Esophagus muscularis mucosa (tissue), 4 donors: ENCODE measurements at regions of chr7 and their contacts with region 1.

Region 1: GRCh38 chr7:23264916-23265458 is 18.4 kb downstream of the GPNMB start:
- DNase-seq: no peak
- H3K4me3 ChIP-seq: no peak overlapping the region
- H3K27ac ChIP-seq: no peak overlapping the region
- H3K4me1 ChIP-seq: no peaks in the 10 kb centered on the region
- H3K27me3 ChIP-seq: no peaks in the 10 kb centered on the region
- CTCF ChIP-seq: no peak
- EP300 ChIP-seq: no peak
- POLR2A ChIP-seq: no peak

Region 2: DNA sequence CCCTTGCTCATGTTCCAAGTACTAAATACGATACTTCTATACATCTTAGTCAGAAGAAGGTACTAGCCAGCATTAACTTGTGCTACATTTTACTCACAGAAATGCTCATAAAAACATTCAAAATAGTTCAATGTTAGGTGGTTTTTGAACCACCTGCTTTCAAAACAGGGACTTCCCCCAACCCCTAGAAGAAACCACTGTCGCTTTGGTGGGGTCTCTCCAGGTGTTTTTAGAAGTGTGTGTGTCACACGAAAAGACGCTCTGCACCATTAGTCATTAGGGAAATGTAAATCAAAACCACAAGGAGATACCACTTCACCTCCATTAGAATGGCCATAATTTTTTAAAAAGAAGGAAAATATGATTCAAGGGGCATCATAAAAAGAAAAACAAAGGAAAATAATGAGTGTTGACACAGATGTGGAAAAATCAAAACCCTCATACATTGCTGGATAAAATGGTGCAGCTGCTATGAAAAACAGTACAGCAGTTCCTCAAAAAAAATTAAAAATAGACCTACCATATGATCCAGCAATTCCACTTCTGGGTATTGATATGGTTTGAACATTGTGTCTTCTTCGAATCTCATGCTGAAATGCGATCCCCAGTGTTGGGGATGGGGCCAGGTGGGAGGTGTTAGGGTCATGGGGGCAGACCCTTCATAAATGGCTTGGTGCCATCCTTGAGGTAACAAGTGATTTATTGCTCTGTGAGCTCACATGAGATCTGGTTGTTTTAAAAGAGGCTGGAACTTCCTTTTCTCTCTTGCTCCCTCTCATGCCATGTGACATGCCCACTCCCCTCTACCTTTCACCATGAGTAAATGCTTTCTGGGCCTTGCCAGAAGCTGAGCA is 108.4 kb after region 1 on chr7:
- intact Hi-C with region 1: no loop called
- DNase-seq: no peak
- H3K4me3 ChIP-seq: no peak overlapping the region
- H3K27ac ChIP-seq: no peak overlapping the region
- H3K4me1 ChIP-seq: no peaks in the 10 kb centered on the region
- H3K27me3 ChIP-seq: peaks cover 0 to 7% (median 0%) of the 10 kb centered on the region in 4 donors
- CTCF ChIP-seq: no peak
- EP300 ChIP-seq: no peak
- POLR2A ChIP-seq: no peak

Region 3: DNA sequence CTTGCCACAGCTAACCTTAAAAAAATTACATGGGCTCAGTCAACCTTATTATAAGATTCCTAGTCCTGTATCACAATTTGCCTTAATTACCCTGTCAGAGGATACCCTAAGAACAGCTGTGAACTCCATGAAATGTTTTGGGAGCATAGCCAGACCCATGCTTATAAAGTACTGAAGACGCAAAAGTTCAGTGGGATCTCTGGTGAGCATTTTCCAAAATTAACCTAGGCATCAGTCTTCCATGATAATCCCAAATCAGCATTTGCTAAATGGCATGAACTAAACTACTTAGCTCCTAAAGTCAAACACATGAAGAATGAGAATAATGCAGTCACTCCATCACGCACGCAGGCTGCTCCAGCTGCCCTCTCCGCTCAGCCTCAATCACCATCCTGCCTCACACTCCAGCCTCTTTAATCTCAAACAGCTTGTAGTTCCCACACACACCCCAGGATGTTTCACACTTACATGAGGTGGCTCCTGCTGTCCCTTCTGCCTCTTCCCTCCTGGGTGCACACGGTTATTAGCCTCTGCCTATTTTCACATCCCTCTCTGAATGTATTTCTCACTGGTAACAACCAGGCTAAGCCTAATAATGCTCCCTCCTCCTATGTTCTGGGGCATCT is 190.0 kb after region 1 on chr7:
- intact Hi-C with region 1: loop called (anchors 5 kb)
- DNase-seq: no peak
- H3K4me3 ChIP-seq: no peak overlapping the region
- H3K27ac ChIP-seq: no peak overlapping the region
- H3K4me1 ChIP-seq: no peaks in the 10 kb centered on the region
- H3K27me3 ChIP-seq: peaks cover 0 to 56% (median 0%) of the 10 kb centered on the region in 4 donors
- CTCF ChIP-seq: no peak
- EP300 ChIP-seq: no peak
- POLR2A ChIP-seq: no peak